AG04450 (cell line): ENCODE measurements at regions of chr12 and their contacts with region 1.

Region 1: GRCh38 chr12:100554608-100555077 is 18.8 kb upstream of the GAS2L3 start:
- DNase-seq: peak; percentile 72
- H3K4me3 ChIP-seq: no peak overlapping the region
- H3K27ac ChIP-seq: no peak overlapping the region
- H3K27me3 ChIP-seq: peaks cover 3% of the 10 kb centered on the region
- CTCF ChIP-seq: peak; percentile 93

Region 2: DNA sequence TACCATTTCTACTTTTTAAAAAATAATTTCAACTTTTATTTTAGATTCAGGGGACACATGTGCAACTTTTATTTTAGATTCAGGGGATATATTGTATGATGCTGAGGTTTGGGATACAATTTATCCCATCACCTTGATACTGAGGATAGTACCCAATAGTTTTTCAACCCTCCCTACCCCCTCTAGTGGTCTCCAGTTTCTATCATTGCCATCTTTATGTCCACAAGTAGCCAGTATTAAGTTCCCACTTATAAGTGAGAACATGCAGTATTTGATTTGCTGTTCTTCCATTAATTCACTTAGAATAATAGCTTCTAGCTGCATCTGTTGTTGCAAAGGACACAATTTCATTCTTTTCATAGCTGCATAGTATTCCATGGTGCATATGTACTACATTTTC is 732.4 kb before region 1 on chr12:
- CTCF ChIA-PET with region 1: interaction called, 12 read pairs
- POLR2A ChIA-PET with region 1: no interaction called
- DNase-seq: no peak
- H3K4me3 ChIP-seq: no peak overlapping the region
- H3K27ac ChIP-seq: no peak overlapping the region
- H3K27me3 ChIP-seq: no peaks in the 10 kb centered on the region
- CTCF ChIP-seq: no peak

Region 3: GRCh38 chr12:100058482-100059029 is 496.1 kb before region 1 on chr12:
- CTCF ChIA-PET with region 1: interaction called, 10 read pairs
- POLR2A ChIA-PET with region 1: no interaction called
- DNase-seq: peak; percentile 74
- H3K4me3 ChIP-seq: no peak overlapping the region
- H3K27ac ChIP-seq: no peak overlapping the region
- H3K27me3 ChIP-seq: no peaks in the 10 kb centered on the region
- CTCF ChIP-seq: peak; percentile 63

Region 4: DNA sequence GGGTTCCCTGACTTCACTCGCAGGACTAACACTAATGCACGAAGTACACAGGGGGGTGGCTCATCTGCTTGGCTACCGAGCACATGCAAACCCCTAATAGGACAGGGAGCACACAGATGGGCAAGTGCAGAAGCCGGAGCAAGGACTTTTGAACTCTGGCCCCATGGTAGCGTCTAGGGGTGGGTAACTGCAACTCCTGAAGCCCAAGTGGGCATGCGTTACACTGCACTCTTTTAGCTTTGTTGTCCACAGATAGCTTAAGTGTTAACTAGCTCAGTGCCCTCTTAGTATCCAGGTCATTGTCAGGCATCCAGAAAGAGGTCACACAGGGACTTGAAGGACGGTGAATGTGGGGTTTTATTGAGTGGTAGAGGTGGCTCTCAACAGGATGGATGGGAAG is 409.0 kb before region 1 on chr12:
- CTCF ChIA-PET with region 1: no interaction called
- POLR2A ChIA-PET with region 1: no interaction called
- DNase-seq: no peak
- H3K4me3 ChIP-seq: no peak overlapping the region
- H3K27ac ChIP-seq: no peak overlapping the region
- H3K27me3 ChIP-seq: no peaks in the 10 kb centered on the region
- CTCF ChIP-seq: no peak

Region 5: GRCh38 chr12:100348657-100349454 is 205.8 kb before region 1 on chr12:
- CTCF ChIA-PET with region 1: interaction called, 90 read pairs
- POLR2A ChIA-PET with region 1: no interaction called
- DNase-seq: no peak
- H3K4me3 ChIP-seq: no peak overlapping the region
- H3K27ac ChIP-seq: no peak overlapping the region
- H3K27me3 ChIP-seq: peaks cover 3% of the 10 kb centered on the region
- CTCF ChIP-seq: peak; percentile 48

Region 6: DNA sequence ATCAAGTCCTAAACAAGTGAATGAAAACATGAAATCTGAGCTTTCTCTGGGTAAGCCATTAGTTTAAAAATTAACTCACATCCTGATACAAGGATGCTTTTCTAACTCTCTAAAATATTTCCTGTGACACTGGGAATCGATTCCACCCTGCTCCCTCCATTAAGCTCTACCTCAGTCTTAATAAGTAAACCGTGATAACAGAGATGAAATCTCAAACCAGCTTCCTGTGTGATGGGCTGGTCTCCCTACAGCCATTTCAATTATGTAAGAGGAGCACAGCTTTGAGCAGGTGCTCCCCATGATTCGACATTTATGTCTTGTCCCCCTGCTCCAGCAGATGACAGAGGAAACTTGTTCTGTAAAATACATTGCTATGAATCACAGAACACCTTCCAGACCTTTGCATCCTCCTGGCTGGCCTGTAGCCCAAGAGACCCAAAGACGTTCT is 77.8 kb after region 1 on chr12:
- CTCF ChIA-PET with region 1: no interaction called
- POLR2A ChIA-PET with region 1: no interaction called
- DNase-seq: no peak
- H3K4me3 ChIP-seq: no peak overlapping the region
- H3K27ac ChIP-seq: no peak overlapping the region
- H3K27me3 ChIP-seq: no peaks in the 10 kb centered on the region
- CTCF ChIP-seq: no peak